Calu3 (cell line): ENCODE measurements at regions of chr12 and their contacts with region 1.

Region 1: DNA sequence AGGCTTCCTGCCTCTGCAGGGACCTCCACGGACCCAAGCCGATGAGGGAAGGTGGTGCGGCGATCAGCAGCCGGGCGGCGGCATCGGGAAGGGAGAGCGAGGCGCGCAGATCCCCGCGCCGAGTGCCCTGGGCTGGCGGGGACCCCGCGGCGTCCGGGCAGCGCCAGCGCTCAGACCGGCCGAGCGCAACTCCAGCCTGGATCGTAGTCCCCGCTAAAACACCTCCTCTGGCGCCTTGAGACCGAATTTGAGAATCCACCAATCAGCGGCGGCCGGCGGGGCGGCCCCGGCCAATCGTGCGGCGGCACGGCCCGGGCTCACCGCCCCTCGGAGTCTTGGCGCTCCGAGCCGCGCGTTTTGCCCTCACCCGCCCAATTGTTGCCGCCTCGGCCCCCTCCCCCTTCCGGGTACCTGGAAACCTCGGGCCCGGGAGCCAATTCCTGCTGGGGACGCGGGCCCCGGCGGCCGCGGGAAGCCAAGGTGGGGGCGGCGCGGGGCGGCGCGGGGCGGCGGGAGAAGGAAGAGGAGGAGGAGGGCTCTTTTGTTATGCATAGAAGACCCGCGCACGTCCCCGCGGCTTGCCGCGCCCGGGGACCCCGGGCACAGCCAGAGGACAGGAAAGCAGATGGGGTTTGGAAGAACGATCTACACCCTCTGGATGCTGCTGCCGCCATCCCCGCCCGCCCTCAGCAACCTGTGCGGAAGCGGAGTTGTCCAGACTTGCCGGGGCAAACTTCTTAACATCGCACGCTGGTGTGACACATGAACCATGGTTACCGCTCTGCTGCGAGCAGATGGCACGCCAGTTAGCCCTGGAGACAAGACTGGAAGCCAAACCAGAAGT is at the start of gene E2F7:
- DNase-seq: peak; percentile 99
- H3K4me3 Mint-ChIP-seq: peak within 1 kb of the TSS; percentile 82
- H3K27ac Mint-ChIP-seq: peak within 1 kb of the TSS; percentile 90
- H3K4me1 Mint-ChIP-seq: peaks cover 40% of the 10 kb centered on the region
- H3K27me3 Mint-ChIP-seq: no peaks in the 10 kb centered on the region
- CTCF ChIP-seq: no peak
- total RNA-seq, gene E2F7: 31.2 and 40.2 TPM in 2 replicates

Region 2: DNA sequence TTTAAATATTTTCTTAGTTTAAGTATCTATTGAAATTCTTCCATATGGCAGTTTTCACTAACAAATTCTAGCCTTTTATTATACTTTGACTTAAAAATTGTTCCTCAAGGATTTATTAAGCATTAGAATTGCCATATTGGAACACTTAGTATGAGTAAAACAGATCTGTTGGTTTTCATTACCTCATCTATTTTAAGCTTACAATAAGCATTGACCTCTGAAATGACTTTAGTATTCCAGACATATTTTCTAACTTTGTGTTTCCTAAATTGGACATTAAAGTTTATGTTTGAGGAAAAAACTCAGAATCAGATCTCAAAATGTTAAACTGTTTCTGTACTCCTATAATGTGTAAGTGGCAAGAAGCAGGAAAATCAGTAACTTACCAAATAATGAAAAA is 235.1 kb before region 1 on chr12:
- CTCF ChIA-PET with region 1: no interaction called
- intact Hi-C with region 1: no loop called
- DNase-seq: no peak
- H3K4me3 Mint-ChIP-seq: no peak overlapping the region
- H3K27ac Mint-ChIP-seq: no peak overlapping the region
- H3K4me1 Mint-ChIP-seq: no peaks in the 10 kb centered on the region
- H3K27me3 Mint-ChIP-seq: no peaks in the 10 kb centered on the region
- CTCF ChIP-seq: no peak

Region 3: DNA sequence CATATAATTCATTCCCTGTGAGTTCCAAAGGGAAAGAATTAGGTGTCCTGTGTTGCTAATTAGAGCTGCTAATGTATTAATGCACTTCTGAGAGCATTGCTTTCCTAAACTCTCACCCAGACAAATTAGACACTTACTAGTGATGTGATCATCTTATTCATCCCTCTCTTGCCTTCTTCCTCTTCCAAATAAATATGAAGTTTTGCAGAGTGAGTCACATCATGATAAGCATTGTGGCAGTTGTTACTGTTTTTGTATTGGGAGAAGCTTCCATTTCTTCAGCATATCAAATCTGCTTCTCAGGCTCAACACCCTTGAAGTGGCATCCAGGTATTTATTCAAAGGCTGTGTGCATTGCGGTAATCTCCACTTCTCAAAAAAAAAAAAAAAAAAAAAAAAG is 37.1 kb after region 1 on chr12:
- CTCF ChIA-PET with region 1: no interaction called
- intact Hi-C with region 1: loop called (anchors 2 kb)
- DNase-seq: no peak
- H3K4me3 Mint-ChIP-seq: no peak overlapping the region
- H3K27ac Mint-ChIP-seq: peak overlapping the region; percentile 82
- H3K4me1 Mint-ChIP-seq: peaks cover 38% of the 10 kb centered on the region
- H3K27me3 Mint-ChIP-seq: no peaks in the 10 kb centered on the region
- CTCF ChIP-seq: no peak

Region 4: GRCh38 chr12:77122236-77122635 is 56.7 kb after region 1 on chr12:
- CTCF ChIA-PET with region 1: no interaction called
- intact Hi-C with region 1: loop called (anchors 5 kb)
- DNase-seq: peak; percentile 54
- H3K4me3 Mint-ChIP-seq: no peak overlapping the region
- H3K27ac Mint-ChIP-seq: peak overlapping the region; percentile 85
- H3K4me1 Mint-ChIP-seq: peaks cover 27% of the 10 kb centered on the region
- H3K27me3 Mint-ChIP-seq: no peaks in the 10 kb centered on the region
- CTCF ChIP-seq: no peak

Region 5: GRCh38 chr12:77133566-77133965 is 68.0 kb after region 1 on chr12:
- CTCF ChIA-PET with region 1: no interaction called
- intact Hi-C with region 1: loop called (anchors 2 kb)
- DNase-seq: peak; percentile 67
- H3K4me3 Mint-ChIP-seq: no peak overlapping the region
- H3K27ac Mint-ChIP-seq: no peak overlapping the region
- H3K4me1 Mint-ChIP-seq: no peaks in the 10 kb centered on the region
- H3K27me3 Mint-ChIP-seq: peaks cover 50% of the 10 kb centered on the region
- CTCF ChIP-seq: no peak

Region 6: GRCh38 chr12:77166696-77167095 is 101.1 kb after region 1 on chr12:
- CTCF ChIA-PET with region 1: no interaction called
- intact Hi-C with region 1: no loop called
- DNase-seq: no peak
- H3K4me3 Mint-ChIP-seq: no peak overlapping the region
- H3K27ac Mint-ChIP-seq: no peak overlapping the region
- H3K4me1 Mint-ChIP-seq: no peaks in the 10 kb centered on the region
- H3K27me3 Mint-ChIP-seq: peaks cover 15% of the 10 kb centered on the region
- CTCF ChIP-seq: no peak

Region 7: DNA sequence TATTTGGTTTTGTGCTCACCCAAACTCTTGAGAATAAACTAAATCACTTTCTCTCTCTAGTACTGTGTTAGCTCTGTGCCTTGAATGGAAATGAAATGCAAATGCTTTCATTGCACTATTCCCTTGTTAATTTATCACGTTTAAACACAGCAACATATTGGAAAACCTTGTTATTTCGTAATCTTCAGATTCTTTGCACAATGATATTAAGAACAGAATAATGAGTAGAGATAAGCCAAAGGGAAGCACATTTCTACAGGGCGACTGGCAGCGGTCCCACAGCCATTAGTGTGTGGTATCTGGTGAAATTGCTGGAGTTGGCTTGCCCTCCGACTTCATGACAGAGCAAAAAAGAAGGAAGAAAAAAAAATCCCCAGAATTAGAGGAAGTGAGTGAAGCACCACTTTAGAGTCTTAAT is 165.9 kb after region 1 on chr12:
- CTCF ChIA-PET with region 1: no interaction called
- intact Hi-C with region 1: loop called (anchors 5 kb)
- DNase-seq: peak; percentile 69
- H3K4me3 Mint-ChIP-seq: peak overlapping the region; percentile 9
- H3K27ac Mint-ChIP-seq: peak overlapping the region; percentile 34
- H3K4me1 Mint-ChIP-seq: peaks cover 21% of the 10 kb centered on the region
- H3K27me3 Mint-ChIP-seq: no peaks in the 10 kb centered on the region
- CTCF ChIP-seq: no peak

Region 8: DNA sequence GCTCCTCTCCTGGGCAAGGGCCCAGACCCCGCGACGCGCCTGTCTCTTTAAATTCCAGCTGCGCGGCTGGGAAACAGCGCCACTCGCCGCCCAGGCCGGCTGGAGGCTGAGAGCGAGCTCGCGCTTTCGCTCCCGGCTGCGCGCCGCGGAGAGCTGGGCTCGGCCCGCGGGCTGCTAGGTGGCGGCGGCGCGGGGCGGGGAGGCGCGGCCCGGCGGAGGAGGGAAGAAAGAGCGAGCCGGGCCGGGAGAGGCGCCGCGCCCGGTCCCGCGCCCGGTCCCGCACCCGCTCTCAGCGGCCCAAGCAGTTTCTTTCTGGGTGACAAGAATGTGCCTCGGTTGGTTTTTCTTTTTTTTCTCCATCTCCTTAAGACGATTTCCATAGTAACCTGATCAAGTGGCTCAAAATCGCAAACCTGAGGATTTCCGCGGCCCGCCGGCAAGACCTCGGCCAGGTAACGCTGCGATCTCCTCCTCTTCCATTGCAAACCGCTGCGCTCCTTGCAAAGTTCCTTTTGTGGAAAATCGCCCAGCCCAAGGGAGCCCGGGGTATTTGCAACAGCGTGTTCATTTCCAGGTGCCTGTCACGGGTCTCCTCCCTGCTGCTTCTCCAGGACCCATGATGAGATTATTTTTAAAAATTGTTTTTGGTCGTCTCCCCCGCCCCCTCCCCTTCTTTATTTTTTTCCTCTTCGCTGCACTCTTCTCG is 259.3 kb after region 1 on chr12:
- CTCF ChIA-PET with region 1: no interaction called
- intact Hi-C with region 1: loop called (anchors 5 kb)
- DNase-seq: peak; percentile 82
- H3K4me3 Mint-ChIP-seq: peak overlapping the region; percentile 87
- H3K27ac Mint-ChIP-seq: peak overlapping the region; percentile 45
- H3K4me1 Mint-ChIP-seq: peaks cover 9% of the 10 kb centered on the region
- H3K27me3 Mint-ChIP-seq: peaks cover 27% of the 10 kb centered on the region
- CTCF ChIP-seq: peak; percentile 14

Region 9: GRCh38 chr12:77599782-77600467 is 534.3 kb after region 1 on chr12:
- CTCF ChIA-PET with region 1: no interaction called
- intact Hi-C with region 1: loop called (anchors 10 kb)
- DNase-seq: no peak
- H3K4me3 Mint-ChIP-seq: peak overlapping the region; percentile 2
- H3K27ac Mint-ChIP-seq: peak overlapping the region; percentile 1
- H3K4me1 Mint-ChIP-seq: peaks cover 46% of the 10 kb centered on the region
- H3K27me3 Mint-ChIP-seq: no peaks in the 10 kb centered on the region
- CTCF ChIP-seq: no peak